ENCODE measurements at regions of chr17 and their contacts with region 1.

Region 1: DNA sequence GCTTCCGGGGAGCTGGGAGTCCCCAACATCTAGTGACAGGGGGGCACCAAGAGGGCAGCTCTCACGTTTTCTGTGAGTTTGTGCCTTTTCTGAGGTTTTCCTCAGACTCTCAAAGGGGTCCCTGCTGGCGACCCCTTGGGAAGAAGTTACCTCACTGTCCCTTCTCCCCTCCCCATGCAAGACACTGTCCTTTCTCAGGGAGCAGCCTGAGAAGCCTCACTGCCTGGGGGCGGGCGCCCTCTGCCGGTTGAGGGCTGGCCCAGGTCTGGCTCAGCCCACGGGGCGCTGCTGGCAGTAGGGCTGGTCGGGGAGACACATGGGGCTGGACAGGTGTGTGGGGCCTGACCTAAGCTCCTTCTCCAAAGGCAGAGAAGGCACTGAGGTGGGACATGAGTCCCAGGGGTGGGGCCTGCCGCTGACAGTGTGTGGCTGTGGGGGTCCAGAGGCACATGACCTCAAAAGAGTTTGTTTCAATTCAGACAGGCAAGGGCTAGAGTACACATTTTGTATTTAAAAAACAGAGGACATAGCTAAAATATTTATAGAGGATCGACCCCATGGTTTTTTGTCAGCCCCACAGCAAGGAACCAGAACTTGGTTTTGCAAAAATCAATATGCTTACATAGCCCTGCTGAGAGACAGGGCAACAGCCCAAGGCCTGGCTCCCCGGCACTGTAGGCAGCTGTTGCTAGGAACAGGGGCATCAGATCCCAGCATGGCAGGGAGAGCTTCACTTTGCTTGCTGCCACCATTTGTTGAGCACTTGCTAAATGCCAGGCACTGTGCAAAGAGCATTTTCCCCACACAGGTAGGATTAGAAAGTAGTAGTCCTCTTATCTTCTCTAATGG is 18.5 kb upstream of the ALDH3A1 start:
- DNase-seq: peak; percentile 55 to 77 (median 69)
- H3K4me3 ChIP-seq: no peak overlapping the region
- H3K4me3 Mint-ChIP-seq: peak overlapping the region in 5 of 8 donors; percentile 31 to 54 (median 49)
- H3K27ac ChIP-seq: no peak overlapping the region
- H3K27ac Mint-ChIP-seq: peak overlapping the region; percentile 24 to 91 (median 72)
- H3K4me1 ChIP-seq: peaks cover 47% of the 10 kb centered on the region
- H3K4me1 Mint-ChIP-seq: peaks cover 25 to 57% (median 38%) of the 10 kb centered on the region in 4 donors
- H3K27me3 ChIP-seq: no peaks in the 10 kb centered on the region
- H3K27me3 Mint-ChIP-seq: peaks cover 2% of the 10 kb centered on the region in 2 donors

Region 2: DNA sequence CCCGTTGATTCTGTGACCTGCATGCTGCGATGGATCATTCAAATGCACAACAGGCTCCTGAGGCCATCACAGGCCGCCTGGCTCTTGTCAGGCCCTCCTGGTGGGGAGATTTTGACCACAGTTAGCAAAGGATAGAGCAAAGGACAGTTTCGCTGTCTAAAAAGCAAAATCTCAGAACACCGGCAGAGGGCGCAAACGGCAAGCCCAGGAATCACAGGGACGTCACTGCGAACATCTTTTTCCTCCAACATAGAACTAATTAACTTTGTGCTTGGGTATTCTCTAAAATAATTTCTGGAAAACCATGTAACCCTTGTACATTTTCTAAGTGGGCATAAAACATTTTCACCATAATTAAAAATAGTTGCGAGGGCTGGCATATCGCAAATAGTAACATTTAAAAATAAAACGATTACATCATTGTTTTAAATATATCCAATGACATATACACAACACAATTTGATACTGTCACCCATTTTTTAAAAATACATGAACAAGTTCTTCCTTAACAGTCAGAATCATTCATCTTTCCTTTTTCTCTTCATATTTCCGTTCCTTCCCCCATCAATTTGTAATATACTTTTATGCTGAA is 252.7 kb before region 1 on chr17:
- CTCF ChIA-PET with region 1: interaction called, 154 read pairs
- POLR2A ChIA-PET with region 1: interaction called, 12 read pairs
- intact Hi-C with region 1: loop called (anchors 1 kb)
- DNase-seq: peak; percentile 59 to 68 (median 64)
- H3K4me3 ChIP-seq: no peak overlapping the region
- H3K4me3 Mint-ChIP-seq: no peak overlapping the region
- H3K27ac ChIP-seq: no peak overlapping the region
- H3K27ac Mint-ChIP-seq: peak overlapping the region in 4 of 7 donors; percentile 7 to 68 (median 31)
- H3K4me1 ChIP-seq: no peaks in the 10 kb centered on the region
- H3K4me1 Mint-ChIP-seq: peaks cover 1 to 8% (median 3%) of the 10 kb centered on the region in 4 donors
- H3K27me3 ChIP-seq: no peaks in the 10 kb centered on the region
- H3K27me3 Mint-ChIP-seq: no peaks in the 10 kb centered on the region

Region 3: DNA sequence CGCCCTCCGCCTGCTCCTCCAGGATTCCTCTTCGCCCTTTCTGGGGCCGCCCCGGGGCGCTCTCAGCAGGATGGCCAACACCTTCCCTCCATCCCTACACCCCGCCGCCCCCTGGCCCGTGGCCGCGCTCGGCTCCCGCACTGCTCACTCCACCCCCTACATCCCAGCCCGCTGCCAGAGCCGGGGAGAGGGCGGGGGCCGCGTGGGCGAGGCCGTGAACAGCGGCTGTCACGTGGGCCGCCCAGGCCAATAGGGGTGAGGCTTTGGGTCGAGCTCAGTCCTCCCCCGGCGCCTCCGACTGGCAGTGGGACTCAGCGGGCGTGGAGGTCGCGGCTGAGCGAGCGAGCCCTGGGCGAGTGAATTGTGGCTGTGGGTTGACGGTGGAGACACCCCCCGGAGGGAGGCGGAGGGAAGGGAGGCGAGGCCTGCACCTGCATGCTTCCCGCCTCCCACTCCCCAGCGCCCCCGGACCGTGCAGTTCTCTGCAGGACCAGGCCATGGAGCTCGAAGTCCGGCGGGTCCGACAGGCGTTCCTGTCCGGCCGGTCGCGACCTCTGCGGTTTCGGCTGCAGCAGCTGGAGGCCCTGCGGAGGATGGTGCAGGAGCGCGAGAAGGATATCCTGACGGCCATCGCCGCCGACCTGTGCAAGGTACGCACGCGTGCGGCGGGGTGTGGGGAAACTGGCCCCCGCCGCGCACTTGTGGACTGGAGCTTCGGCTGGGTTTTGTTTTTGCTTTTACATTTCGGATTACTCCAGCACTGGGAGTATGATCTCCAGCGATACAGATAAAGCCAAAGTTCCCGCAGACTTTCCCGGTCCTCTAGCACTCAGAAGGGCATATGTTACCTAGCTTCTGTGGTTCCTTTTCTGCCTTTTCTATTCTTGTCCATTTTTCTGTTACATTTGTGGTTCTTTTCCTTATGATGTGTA is 117.9 kb before region 1 on chr17 and contains the start of gene ALDH3A2:
- CTCF ChIA-PET with region 1: interaction called, 32 read pairs
- POLR2A ChIA-PET with region 1: interaction called, 14 read pairs
- intact Hi-C with region 1: loop called (anchors 5 kb)
- DNase-seq: peak; percentile 89 to 95 (median 89)
- H3K4me3 ChIP-seq: peak within 1 kb of the TSS; percentile 33 to 86
- H3K4me3 Mint-ChIP-seq: peak within 1 kb of the TSS; percentile 93 to 98 (median 94)
- H3K27ac ChIP-seq: peak within 1 kb of the TSS; percentile 54
- H3K27ac Mint-ChIP-seq: peak within 1 kb of the TSS; percentile 83 to 97 (median 94)
- H3K4me1 ChIP-seq: peaks cover 26% of the 10 kb centered on the region
- H3K4me1 Mint-ChIP-seq: peaks cover 21 to 41% (median 32%) of the 10 kb centered on the region in 4 donors
- H3K27me3 ChIP-seq: no peaks in the 10 kb centered on the region
- H3K27me3 Mint-ChIP-seq: no peaks in the 10 kb centered on the region
- total RNA-seq, gene ALDH3A2: 45.8 to 52.5 TPM

Region 4: DNA sequence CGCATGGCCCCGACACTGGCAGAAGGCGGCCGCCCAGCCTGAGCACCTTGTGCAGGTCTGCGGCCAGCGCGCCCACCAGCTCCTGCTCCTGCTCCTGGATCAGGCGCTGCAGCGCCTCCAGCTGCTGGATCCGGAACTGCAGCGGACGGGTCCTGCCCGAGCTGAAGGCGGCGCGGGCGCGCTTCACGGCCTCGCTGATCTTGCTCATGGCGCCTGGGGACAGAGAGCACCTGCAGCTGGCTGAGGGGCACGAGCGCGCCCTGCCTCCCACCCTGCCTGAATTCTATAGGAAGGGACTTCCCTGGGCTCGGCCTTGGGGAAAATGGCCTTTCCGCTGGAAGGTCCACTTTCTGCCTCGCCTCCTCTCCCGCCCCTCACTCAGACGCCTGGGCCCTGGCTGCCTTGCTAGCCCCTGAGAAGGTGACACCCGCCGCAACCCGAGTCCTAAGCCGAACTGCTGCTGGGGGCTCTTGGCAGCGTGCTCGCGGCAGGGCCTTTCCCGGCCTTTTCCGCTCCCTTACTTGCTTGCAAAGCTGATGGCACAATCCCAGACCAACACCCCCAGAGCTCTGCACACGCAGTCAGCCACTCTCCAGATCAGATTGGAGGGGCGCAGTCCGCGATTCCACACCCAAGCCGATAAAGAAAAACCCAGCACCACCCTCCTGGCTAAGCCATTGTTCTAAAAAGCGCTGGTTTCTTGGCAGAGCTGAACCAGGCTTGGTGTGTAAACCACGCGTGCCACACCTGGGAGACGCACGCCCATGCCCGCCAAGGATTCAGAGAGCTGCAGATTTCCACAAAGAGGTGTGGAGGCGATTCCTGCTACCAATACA is 21.5 kb before region 1 on chr17:
- CTCF ChIA-PET with region 1: interaction called, 63 read pairs
- POLR2A ChIA-PET with region 1: interaction called, 3 read pairs
- intact Hi-C with region 1: no loop called
- DNase-seq: peak; percentile 78 to 82 (median 79)
- H3K4me3 ChIP-seq: no peak overlapping the region
- H3K4me3 Mint-ChIP-seq: peak overlapping the region in 7 of 8 donors; percentile 40 to 71 (median 54)
- H3K27ac ChIP-seq: no peak overlapping the region
- H3K27ac Mint-ChIP-seq: no peak overlapping the region
- H3K4me1 ChIP-seq: peaks cover 8% of the 10 kb centered on the region
- H3K4me1 Mint-ChIP-seq: peaks cover 3 to 9% (median 4%) of the 10 kb centered on the region in 4 donors
- H3K27me3 ChIP-seq: no peaks in the 10 kb centered on the region
- H3K27me3 Mint-ChIP-seq: peaks cover 3 to 7% of the 10 kb centered on the region in 2 donors

Region 5: DNA sequence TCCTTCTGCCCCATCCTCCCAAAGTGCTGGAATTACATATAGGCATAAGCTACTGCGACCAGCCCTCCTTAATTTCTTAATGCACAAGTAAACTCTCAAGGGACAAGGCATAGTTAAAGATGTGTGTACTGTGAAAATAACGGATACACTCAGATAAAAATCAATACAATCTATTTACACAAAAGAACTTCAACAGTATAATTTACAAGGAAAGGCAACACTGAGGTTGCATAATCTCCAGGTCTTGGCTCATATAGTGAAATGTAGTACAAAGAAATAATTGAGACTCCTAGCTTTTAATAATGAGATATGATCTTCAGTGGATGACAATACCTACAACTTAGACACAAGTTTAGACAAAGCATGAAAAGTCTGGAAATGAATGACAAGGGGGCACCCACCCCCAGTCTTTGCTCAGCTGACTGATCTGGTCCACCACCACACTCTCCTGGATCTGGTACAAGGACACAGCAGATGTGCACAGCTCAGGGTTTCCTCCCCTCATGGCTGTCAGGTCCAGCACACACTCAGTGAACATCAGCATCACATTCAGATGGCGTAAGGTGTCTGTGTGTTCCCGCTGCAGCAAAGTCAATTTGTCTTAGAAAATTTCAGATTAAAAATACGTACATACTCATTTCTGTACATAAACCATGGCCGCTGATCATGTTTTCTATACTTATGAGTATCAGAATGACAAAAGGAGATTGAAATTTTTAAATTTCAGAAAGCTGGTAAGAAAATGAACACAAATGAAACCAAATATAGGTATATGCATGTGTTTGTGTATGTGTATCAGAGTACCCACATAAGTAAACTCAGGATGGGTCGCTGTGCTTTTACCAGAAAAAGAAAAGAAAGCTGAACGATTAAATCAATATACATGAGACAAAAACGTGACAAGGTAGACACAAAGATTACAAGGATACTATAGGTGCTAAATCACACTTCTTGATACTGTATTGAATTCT is 15.1 kb after region 1 on chr17:
- CTCF ChIA-PET with region 1: interaction called, 63 read pairs
- POLR2A ChIA-PET with region 1: no interaction called
- intact Hi-C with region 1: no loop called
- DNase-seq: no peak
- H3K4me3 ChIP-seq: no peak overlapping the region
- H3K4me3 Mint-ChIP-seq: no peak overlapping the region
- H3K27ac ChIP-seq: no peak overlapping the region
- H3K27ac Mint-ChIP-seq: peak overlapping the region in 6 of 7 donors; percentile 19 to 80 (median 65)
- H3K4me1 ChIP-seq: no peaks in the 10 kb centered on the region
- H3K4me1 Mint-ChIP-seq: peaks cover 0 to 4% (median 0%) of the 10 kb centered on the region in 4 donors
- H3K27me3 ChIP-seq: no peaks in the 10 kb centered on the region
- H3K27me3 Mint-ChIP-seq: no peaks in the 10 kb centered on the region

Region 6: GRCh38 chr17:19876529-19877161 is 110.0 kb after region 1 on chr17:
- CTCF ChIA-PET with region 1: no interaction called
- POLR2A ChIA-PET with region 1: no interaction called
- intact Hi-C with region 1: no loop called
- DNase-seq: peak; percentile 57 to 72 (median 64)
- H3K4me3 ChIP-seq: peak overlapping the region; percentile 0 to 16
- H3K4me3 Mint-ChIP-seq: peak overlapping the region; percentile 73 to 94 (median 78)
- H3K27ac ChIP-seq: peak overlapping the region; percentile 19
- H3K27ac Mint-ChIP-seq: peak overlapping the region; percentile 64 to 96 (median 90)
- H3K4me1 ChIP-seq: peaks cover 32% of the 10 kb centered on the region
- H3K4me1 Mint-ChIP-seq: peaks cover 29 to 57% (median 36%) of the 10 kb centered on the region in 4 donors
- H3K27me3 ChIP-seq: no peaks in the 10 kb centered on the region
- H3K27me3 Mint-ChIP-seq: no peaks in the 10 kb centered on the region

Region 7: GRCh38 chr17:19992803-19993713 is 226.4 kb after region 1 on chr17:
- CTCF ChIA-PET with region 1: no interaction called
- POLR2A ChIA-PET with region 1: no interaction called
- intact Hi-C with region 1: no loop called
- DNase-seq: peak; percentile 74 to 77 (median 75)
- H3K4me3 ChIP-seq: no peak overlapping the region
- H3K4me3 Mint-ChIP-seq: peak overlapping the region in 2 of 8 donors; percentile 25 to 55
- H3K27ac ChIP-seq: no peak overlapping the region
- H3K27ac Mint-ChIP-seq: peak overlapping the region in 3 of 7 donors; percentile 4 to 51 (median 29)
- H3K4me1 ChIP-seq: peaks cover 3% of the 10 kb centered on the region
- H3K4me1 Mint-ChIP-seq: peaks cover 2 to 6% (median 4%) of the 10 kb centered on the region in 4 donors
- H3K27me3 ChIP-seq: no peaks in the 10 kb centered on the region
- H3K27me3 Mint-ChIP-seq: peaks cover 9 to 10% of the 10 kb centered on the region in 2 donors

Measured in CD4-positive, alpha-beta memory T cell (primary cell).